Calu3 (cell line): ENCODE measurements at regions of chr4 and their contacts with region 1.

Region 1: DNA sequence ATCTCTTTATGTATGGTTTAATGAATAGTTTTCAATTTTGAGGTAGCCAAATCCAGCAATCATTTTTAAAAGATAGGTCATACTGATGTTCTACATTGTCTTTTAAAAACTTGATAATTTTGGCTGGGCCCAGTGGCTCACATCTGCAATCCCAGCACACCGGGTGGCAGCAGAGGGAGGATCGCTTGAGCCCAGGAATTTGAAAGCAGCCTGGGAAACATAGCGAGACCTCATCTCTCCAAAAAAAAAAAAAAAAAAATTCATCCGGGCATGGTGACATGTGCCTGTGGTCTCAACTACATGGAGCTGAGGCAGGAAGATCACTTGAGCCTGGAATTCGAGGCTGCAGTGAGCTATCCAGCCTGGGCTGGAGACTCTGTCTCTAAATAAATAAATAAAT is 419.8 kb downstream of the GALNTL6 start:
- DNase-seq: no peak
- H3K4me3 Mint-ChIP-seq: no peak overlapping the region
- H3K27ac Mint-ChIP-seq: no peak overlapping the region
- H3K4me1 Mint-ChIP-seq: no peaks in the 10 kb centered on the region
- H3K27me3 Mint-ChIP-seq: no peaks in the 10 kb centered on the region
- CTCF ChIP-seq: no peak

Region 2: DNA sequence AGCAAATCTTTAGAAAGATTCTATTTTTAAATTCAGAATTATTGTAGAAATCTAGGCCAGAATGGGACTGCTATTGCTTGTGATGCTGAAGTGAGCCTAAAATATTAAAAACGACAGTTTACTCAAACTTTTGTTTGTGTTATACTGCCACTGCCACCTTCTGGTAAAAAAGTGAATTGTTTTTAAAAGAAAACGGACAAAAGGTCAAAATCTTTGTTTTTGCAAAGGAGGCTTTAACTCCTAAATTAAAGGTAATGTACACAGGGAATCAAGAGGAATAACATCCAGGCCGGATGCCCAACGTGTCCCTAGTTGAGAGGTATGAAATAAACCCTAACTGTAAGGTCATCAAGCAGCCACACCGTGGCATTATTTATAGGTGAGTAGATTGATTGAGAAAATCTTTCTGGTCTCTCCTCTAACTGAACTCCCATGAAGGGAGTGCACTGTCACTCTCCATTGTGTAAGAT is 597.4 kb after region 1 on chr4:
- CTCF ChIA-PET with region 1: no interaction called
- intact Hi-C with region 1: loop called (anchors 5 kb)
- DNase-seq: no peak
- H3K4me3 Mint-ChIP-seq: no peak overlapping the region
- H3K27ac Mint-ChIP-seq: no peak overlapping the region
- H3K4me1 Mint-ChIP-seq: no peaks in the 10 kb centered on the region
- H3K27me3 Mint-ChIP-seq: no peaks in the 10 kb centered on the region
- CTCF ChIP-seq: peak; percentile 12